GM18951 (cell line): ENCODE measurements at regions of chr1 and their contacts with region 1.

Region 1: GRCh38 chr1:42736150-42736850 is 3.7 kb downstream of the CLDN19 start:
- POLR2A ChIP-seq: no peak

Region 2: GRCh38 chr1:42298520-42298919 is 437.8 kb before region 1 on chr1:
- in situ Hi-C with region 1: no loop called
- POLR2A ChIP-seq: no peak

Region 3: GRCh38 chr1:42335050-42335808 is 401.1 kb before region 1 on chr1 and contains the start of gene FOXJ3:
- in situ Hi-C with region 1: loop called (anchors 10 kb)
- POLR2A ChIP-seq: peak; percentile 94

Region 4: DNA sequence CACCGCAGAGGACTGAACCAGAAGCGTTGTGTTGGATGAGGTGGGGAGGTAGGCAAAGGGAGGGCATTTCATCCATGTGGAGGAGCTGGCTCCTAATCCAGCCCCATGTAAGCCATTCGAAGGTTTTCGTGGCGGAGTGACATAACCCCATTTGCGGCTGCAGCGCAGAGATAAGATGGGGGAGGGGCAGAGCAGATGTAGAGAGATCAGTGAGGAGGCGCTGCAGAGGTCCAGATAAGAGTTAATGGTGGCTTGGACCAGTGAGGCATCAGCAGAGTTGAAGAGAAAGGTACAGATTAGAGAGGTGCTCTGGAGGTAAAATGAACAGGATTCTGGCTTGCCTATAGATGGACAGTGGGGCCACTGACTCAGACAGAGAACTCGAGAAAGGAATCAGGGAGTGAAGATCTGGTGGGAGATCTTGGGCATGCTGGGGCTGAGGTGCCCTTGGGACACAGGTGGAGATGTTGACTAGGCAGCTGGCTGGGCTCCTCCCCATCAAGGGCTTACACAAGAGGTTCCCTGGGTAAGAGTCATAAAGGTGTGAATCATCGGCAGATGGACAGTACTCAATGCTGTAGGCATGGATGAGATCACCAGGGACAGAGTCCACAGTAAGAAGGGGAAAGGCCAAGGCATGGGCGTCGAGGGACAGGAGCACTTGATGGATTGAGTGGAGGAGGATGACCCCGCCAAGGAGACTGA is 786.6 kb after region 1 on chr1:
- in situ Hi-C with region 1: no loop called
- POLR2A ChIP-seq: no peak